Activated CD8-positive, alpha-beta T cell treated with anti-CD3 and anti-CD28 coated beads, Interleukin-2, amount 10 ng/mL, durations not matched to agents 7 days and 5 days (primary cell): ENCODE measurements at regions of chr1 and their contacts with region 1.

Region 1: GRCh38 chr1:212608209-212608955 is at the start of gene ATF3:
- DNase-seq: peak; percentile 97
- ATAC-seq: peak; percentile 74
- H3K4me3 Mint-ChIP-seq: peak within 1 kb of the TSS; percentile 85
- H3K27ac Mint-ChIP-seq: peak within 1 kb of the TSS; percentile 96
- H3K4me1 Mint-ChIP-seq: peaks cover 49% of the 10 kb centered on the region
- H3K27me3 Mint-ChIP-seq: peaks cover 39% of the 10 kb centered on the region
- total RNA-seq, gene ATF3: 12.1 to 12.5 TPM

Region 2: GRCh38 chr1:212558693-212559480 is 49.5 kb before region 1 on chr1:
- CTCF ChIA-PET with region 1: no interaction called
- POLR2A ChIA-PET with region 1: interaction called, 14 read pairs
- DNase-seq: peak; percentile 94
- ATAC-seq: peak; percentile 92
- H3K4me3 Mint-ChIP-seq: peak overlapping the region; percentile 74
- H3K27ac Mint-ChIP-seq: peak overlapping the region; percentile 95
- H3K4me1 Mint-ChIP-seq: peaks cover 16% of the 10 kb centered on the region
- H3K27me3 Mint-ChIP-seq: peaks cover 38% of the 10 kb centered on the region

Region 3: DNA sequence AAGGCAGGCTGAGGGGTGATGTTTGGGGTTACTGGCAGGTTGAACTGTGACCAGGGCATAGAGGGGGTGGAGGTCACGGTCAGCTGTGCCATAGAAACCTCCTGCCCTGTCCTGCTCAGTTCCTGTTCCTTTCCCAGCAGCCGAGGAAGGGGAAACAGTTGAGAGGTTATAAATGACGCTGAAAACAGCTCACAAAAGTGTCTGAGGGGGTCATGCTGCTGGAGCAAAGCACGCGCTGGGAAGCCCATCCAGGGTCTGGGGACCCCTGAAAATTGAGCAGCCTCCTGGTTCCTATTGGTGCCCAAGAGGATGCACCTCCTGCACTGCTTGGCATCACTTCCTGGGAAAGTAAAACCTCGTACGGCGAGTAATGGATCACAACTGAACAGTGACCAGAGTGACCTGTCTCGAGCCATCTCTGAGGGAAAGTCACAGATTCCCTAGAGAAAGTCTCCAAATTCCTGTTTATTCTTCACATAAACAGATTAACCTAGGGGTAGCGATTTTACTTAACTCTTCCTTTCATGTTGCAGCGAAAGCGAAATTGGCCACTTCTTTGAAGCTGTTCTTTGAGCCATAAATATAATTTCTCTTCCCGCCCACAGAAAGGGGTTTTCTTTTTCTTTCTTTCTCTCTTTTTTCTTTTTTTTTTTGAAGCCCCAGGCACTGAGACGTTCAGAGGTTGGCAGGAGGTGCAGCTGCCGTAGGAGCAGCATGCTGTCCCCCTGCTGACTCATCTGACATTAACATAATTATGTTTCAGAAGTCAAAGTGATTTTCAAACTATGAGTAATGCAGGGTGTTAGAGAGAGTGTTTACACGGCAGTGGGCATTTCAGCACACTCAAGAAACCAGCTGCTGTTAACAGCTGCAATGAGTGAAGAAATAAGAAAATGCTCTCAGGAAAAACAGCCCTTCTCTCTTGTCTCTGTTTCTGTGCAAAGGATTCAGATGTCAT is 41.6 kb before region 1 on chr1:
- CTCF ChIA-PET with region 1: no interaction called
- POLR2A ChIA-PET with region 1: interaction called, 20 read pairs
- DNase-seq: peak; percentile 64
- ATAC-seq: peak; percentile 99
- H3K4me3 Mint-ChIP-seq: peak overlapping the region; percentile 85
- H3K27ac Mint-ChIP-seq: peak overlapping the region; percentile 92
- H3K4me1 Mint-ChIP-seq: peaks cover 22% of the 10 kb centered on the region
- H3K27me3 Mint-ChIP-seq: peaks cover 15% of the 10 kb centered on the region

Region 4: GRCh38 chr1:212595787-212596714 is 12.3 kb before region 1 on chr1:
- CTCF ChIA-PET with region 1: interaction called, 7 read pairs
- POLR2A ChIA-PET with region 1: interaction called, 67 read pairs
- DNase-seq: peak; percentile 72
- ATAC-seq: peak; percentile 96
- H3K4me3 Mint-ChIP-seq: peak overlapping the region; percentile 78
- H3K27ac Mint-ChIP-seq: peak overlapping the region; percentile 96
- H3K4me1 Mint-ChIP-seq: peaks cover 26% of the 10 kb centered on the region
- H3K27me3 Mint-ChIP-seq: peaks cover 22% of the 10 kb centered on the region

Region 5: DNA sequence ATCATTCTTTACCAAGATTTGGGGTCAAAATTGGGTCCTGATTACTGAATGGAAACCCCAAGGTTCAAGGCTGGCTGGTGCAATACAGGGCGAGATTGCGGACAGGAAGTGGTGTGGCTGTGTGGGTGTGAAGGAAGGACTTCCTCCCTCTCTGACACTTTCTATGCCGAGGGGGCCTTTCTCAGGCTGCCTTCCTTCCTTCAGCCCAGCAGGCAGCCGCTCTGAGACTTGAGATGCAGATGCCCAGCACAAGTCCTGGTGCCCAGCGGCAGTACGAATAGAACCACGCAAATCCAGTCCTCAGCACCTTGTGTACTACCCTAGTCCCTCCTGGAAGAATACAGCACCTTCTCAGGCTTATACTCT is 75.0 kb after region 1 on chr1:
- CTCF ChIA-PET with region 1: no interaction called
- POLR2A ChIA-PET with region 1: interaction called, 10 read pairs
- DNase-seq: peak; percentile 88
- ATAC-seq: peak; percentile 81
- H3K4me3 Mint-ChIP-seq: peak overlapping the region; percentile 56
- H3K27ac Mint-ChIP-seq: peak overlapping the region; percentile 94
- H3K4me1 Mint-ChIP-seq: peaks cover 85% of the 10 kb centered on the region
- H3K27me3 Mint-ChIP-seq: no peaks in the 10 kb centered on the region